Head of caudate nucleus (tissue), 42 donors: ENCODE measurements at regions of chr9 and their contacts with region 1.

Region 1: GRCh38 chr9:4679268-4680172 is at the start of gene CDC37L1:
- DNase-seq: peak; percentile 94 to 100 (median 98)

Region 2: GRCh38 chr9:4750023-4750673 is 70.6 kb after region 1 on chr9:
- intact Hi-C with region 1: no loop called
- DNase-seq: peak in 1 of 42 donors; percentile 20

Region 3: DNA sequence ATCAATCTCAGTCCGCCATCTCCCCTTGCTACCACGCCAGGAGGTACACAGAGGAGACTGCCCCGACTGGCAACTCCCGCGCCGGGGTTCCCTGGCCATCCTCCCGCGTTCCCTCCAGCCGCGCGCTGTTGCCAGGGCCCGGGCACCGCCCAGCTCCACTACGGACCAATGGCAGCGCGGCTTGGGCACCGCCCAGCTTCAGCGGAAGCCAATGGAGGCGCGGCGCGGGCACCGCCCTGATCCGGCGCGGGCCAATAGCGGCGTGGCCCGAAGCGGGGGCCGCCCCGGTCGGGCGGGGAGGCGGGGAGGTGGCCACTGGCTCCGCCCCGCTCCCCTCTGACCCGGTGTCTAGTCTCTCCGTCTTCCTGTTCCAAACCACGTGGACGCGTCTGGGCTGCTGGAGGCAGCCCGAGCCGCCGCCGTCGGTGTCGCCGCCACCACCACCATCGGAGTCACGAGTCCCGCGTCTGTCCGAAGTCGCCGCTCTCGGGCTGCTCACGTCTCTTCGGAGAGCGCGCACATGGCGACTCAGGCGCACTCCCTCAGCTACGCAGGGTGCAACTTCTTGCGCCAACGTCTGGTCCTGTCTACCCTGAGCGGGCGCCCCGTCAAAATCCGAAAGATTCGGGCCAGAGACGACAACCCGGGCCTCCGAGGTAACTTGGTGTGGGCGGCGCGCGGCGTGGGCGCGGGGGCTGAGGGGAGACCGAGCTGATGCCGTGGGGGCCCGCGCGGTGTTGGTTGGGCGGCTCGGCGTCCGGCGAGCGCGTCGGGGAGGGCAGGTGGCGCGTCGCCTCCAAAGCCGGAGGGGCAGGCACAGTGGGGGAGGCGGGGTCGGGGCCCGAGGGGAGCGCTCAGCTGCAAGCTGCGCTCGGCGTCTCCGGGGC is 113.3 kb after region 1 on chr9 and contains the start of gene RCL1:
- intact Hi-C with region 1: loop called (anchors 5 kb)
- DNase-seq: peak; percentile 90 to 99 (median 98)